HepG2 (cell line): ENCODE measurements at regions of chr14 and their contacts with region 1.

Region 1: GRCh38 chr14:49852301-49853157 is at the start of gene NEMF:
- DNase-seq: peak; percentile 87
- ATAC-seq: peak; percentile 87
- H3K4me3 ChIP-seq: peak within 1 kb of the TSS; percentile 95 to 97 (median 96)
- H3K27ac ChIP-seq: peak within 1 kb of the TSS; percentile 89
- H3K4me1 ChIP-seq: peaks cover 19% of the 10 kb centered on the region
- H3K27me3 ChIP-seq: no peaks in the 10 kb centered on the region; a peak in 1 of 5 replicates
- CTCF ChIP-seq: peak; percentile 83
- EP300 ChIP-seq: no peak
- POLR2A ChIP-seq: peak; percentile 90 to 93
- RAD21 ChIP-seq: no peak; the same call in 1 of the 2 replicates
- total RNA-seq, gene NEMF: 57.9 and 62.5 TPM in 2 replicates

Region 2: DNA sequence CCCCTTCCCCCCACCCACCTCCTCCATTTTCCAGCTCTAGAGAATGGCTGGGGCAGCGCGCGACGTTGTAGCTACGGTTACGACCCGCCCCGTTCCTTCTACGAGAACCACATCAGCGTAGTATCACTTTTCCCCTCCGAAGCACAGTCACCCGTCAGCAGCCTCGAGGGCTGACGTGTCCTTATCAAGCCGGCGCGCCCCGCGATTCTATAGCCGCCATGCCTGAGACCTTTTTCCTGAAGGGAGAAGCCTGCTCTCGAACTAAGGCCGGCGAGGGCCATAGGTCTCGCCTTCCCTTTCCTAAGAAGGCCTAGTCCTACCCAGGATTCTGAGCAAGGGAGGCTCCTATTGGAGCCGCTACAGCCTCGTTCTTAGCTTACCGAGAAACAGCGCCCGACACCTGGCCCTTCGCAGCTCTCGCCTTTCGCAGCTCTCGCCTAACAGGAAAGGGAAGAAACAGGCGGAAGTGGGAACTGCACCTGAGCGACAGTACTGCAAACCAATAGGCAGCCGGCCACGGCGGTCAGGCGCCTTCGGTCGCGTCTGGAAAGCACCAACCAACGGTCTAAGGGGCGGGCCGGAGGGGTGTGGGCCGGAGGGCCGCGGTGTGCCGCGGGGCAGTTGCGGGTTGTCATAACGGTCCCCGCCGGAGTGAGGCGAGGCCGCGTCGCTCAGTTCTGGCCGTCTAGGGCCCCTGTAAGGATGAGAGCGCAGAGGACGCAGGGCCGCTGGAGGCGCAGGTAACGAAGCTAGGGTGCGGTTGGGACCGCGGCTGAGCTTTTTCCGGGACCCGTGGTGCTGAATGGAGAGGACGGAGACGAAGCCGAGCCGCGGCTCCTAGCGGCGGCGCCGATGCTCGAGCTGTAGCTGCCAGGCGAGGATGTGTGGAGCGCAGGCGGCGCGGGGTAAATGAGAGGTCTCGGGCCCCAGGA is 232.1 kb before region 1 on chr14 and contains the starts of genes MGAT2 and RPL36AL:
- CTCF ChIA-PET with region 1: no interaction called
- POLR2A ChIA-PET with region 1: interaction called, 10 read pairs
- in situ Hi-C with region 1: no loop called
- intact Hi-C with region 1: no loop called
- DNase-seq: peak; percentile 95
- ATAC-seq: peak; percentile 97
- H3K4me3 ChIP-seq: peak within 1 kb of the TSS; percentile 81 to 92 (median 92)
- H3K27ac ChIP-seq: peak within 1 kb of the TSS; percentile 94
- H3K4me1 ChIP-seq: peaks cover 62% of the 10 kb centered on the region
- H3K27me3 ChIP-seq: no peaks in the 10 kb centered on the region; a peak in 1 of 5 replicates
- CTCF ChIP-seq: peak; percentile 46
- EP300 ChIP-seq: peak in 1 of 2 experiments; percentile 57; a peak in 1 of 4 replicates
- POLR2A ChIP-seq: peak; percentile 97 to 98
- RAD21 ChIP-seq: peak; percentile 63
- total RNA-seq, gene MGAT2: 47.2 and 51.9 TPM in 2 replicates
- total RNA-seq, gene RPL36AL: 294 and 383 TPM in 2 replicates

Region 3: DNA sequence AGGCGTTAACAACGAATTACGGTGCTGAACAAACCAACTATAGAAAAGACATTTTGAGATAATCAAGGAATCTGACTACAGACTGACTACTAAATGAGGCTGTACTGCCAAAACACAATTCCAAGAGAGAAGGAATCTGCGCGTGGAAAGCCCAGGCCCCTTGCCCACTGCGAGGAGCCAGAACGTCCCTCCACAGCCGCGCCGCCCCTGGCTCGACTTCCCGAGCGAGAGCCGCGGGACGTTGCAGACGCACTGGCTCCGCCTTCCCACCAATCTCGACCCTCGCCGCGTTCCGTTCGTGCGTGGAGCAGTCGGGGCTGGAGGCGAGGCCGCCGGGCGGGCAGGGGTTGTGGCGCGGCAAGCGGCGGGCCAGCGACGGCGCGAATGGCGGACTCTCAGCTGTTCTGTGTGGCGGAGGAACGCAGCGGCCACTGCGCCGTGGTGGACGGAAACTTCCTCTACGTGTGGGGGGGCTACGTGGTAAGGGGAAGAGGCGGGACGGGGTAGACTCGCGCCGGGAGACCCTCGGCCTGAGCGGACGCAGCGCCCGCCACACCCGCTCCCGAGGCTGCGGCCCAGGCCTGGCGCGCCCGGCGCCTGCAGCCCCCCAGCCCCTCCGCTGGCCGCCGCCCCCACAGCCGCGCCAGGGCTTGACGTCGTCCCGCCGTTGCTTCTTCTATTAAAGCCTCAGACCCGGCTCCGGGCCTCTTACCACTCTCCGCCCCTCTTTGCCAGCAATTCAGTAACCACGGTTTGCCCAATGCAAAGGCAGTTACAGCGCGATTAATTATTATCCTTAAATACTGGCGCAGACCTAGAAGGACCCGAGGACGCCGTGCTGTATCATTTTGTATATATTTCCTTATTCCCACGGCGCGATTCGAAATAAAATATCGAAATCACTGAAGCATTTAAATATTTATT is 159.5 kb before region 1 on chr14 and contains the start of gene KLHDC1:
- CTCF ChIA-PET with region 1: no interaction called
- POLR2A ChIA-PET with region 1: interaction called, 3 read pairs
- in situ Hi-C with region 1: no loop called
- intact Hi-C with region 1: loop called (anchors 5 kb)
- DNase-seq: peak; percentile 66
- ATAC-seq: peak; percentile 83
- H3K4me3 ChIP-seq: peak within 1 kb of the TSS; percentile 67 to 88 (median 75)
- H3K27ac ChIP-seq: peak within 1 kb of the TSS; percentile 77
- H3K4me1 ChIP-seq: peaks cover 39% of the 10 kb centered on the region
- H3K27me3 ChIP-seq: no peaks in the 10 kb centered on the region; a peak in 1 of 5 replicates
- CTCF ChIP-seq: peak; percentile 35; the same call in 1 of the 2 replicates
- EP300 ChIP-seq: no peak
- POLR2A ChIP-seq: peak; percentile 50 to 70; a peak in 3 of 4 replicates
- RAD21 ChIP-seq: 0 out of 2 replicates have a peak, but pooled peaks have one; percentile 31
- total RNA-seq, gene KLHDC1: 0.11 TPM in 1 of 2 replicates, not detected in the other

Region 4: GRCh38 chr14:49880267-49881064 is 27.9 kb after region 1 on chr14:
- CTCF ChIA-PET with region 1: no interaction called
- POLR2A ChIA-PET with region 1: no interaction called
- in situ Hi-C with region 1: no loop called
- intact Hi-C with region 1: no loop called
- DNase-seq: no peak
- ATAC-seq: peak; percentile 72
- H3K4me3 ChIP-seq: peak overlapping the region in 1 of 3 experiments; percentile 44; a peak in 2 of 6 replicates
- H3K27ac ChIP-seq: no peak overlapping the region
- H3K4me1 ChIP-seq: peaks cover 32% of the 10 kb centered on the region
- H3K27me3 ChIP-seq: no peaks in the 10 kb centered on the region
- CTCF ChIP-seq: no peak
- EP300 ChIP-seq: no peak
- POLR2A ChIP-seq: no peak
- RAD21 ChIP-seq: no peak

Region 5: DNA sequence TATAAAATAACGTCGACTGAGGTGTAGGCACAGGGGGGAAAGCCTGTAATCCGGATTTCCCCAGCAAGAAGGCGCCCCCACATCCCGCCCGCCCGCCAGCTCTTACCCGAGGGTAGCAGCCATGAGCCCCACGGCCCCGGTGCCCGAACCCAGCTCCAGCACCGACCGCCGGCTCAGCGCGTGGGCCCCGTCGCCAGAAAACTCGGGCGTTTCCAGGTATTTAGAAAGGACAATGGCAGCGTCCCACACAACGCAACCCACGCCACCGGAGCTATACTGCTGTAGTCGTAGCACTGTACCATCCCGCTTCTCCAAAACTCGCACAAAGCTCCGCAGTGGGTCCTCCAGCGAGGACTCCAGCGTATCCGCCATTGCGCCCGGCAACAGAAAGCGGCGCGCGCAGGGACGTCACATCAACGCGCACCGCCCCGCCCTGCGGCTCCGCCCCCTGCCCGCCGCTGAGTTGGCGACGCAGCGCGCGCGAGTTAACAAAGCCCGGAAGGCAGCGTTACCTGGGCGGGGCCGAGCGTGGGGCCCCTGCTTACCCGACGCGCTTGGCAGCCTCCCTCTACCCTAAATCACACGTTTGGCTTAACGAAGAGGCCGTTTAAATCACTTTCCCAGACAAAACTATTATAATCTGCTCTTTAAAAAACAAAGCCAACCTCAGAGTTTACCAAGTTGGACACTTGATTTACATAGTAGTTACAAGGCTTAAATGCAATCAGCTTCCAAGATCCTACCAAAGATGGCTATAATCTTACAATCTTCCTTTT is 263.8 kb after region 1 on chr14 and contains the start of gene VCPKMT:
- CTCF ChIA-PET with region 1: no interaction called
- POLR2A ChIA-PET with region 1: interaction called, 17 read pairs
- in situ Hi-C with region 1: no loop called
- intact Hi-C with region 1: no loop called
- DNase-seq: peak; percentile 80
- ATAC-seq: peak; percentile 99
- H3K4me3 ChIP-seq: peak within 1 kb of the TSS; percentile 78 to 87 (median 82)
- H3K27ac ChIP-seq: peak within 1 kb of the TSS; percentile 67
- H3K4me1 ChIP-seq: peaks cover 20% of the 10 kb centered on the region
- H3K27me3 ChIP-seq: no peaks in the 10 kb centered on the region
- CTCF ChIP-seq: 0 out of 2 replicates have a peak, but pooled peaks have one; percentile 15
- EP300 ChIP-seq: peak in 1 of 2 experiments; percentile 45; a peak in 1 of 4 replicates
- POLR2A ChIP-seq: peak; percentile 88 to 96
- RAD21 ChIP-seq: peak; percentile 44; the same call in 1 of the 2 replicates
- total RNA-seq, gene VCPKMT: 5.4 and 5.5 TPM in 2 replicates

Region 6: DNA sequence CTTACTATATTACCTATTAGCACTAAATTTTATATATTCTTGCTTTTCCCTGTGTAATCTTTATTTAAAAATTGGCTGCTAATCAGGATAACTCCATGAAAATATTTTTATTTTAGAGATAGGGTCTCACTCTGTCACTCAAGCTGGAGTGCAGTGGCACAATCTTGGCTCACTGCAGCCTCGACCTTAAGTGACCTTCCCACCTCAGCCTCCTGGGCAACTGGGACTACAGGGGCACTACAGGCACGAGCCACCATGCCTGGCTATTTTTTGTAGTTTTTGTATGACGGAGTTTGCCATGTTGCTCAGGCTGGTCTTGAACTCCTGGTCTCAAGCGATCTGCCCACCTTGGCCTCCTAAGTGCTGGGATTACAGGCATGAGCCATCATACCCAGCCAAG is 296.3 kb after region 1 on chr14:
- CTCF ChIA-PET with region 1: no interaction called
- POLR2A ChIA-PET with region 1: no interaction called
- in situ Hi-C with region 1: no loop called
- intact Hi-C with region 1: no loop called
- DNase-seq: no peak
- ATAC-seq: no peak
- H3K4me3 ChIP-seq: no peak overlapping the region
- H3K27ac ChIP-seq: no peak overlapping the region
- H3K4me1 ChIP-seq: no peaks in the 10 kb centered on the region
- H3K27me3 ChIP-seq: no peaks in the 10 kb centered on the region
- CTCF ChIP-seq: no peak
- EP300 ChIP-seq: no peak
- POLR2A ChIP-seq: no peak
- RAD21 ChIP-seq: no peak

Region 7: DNA sequence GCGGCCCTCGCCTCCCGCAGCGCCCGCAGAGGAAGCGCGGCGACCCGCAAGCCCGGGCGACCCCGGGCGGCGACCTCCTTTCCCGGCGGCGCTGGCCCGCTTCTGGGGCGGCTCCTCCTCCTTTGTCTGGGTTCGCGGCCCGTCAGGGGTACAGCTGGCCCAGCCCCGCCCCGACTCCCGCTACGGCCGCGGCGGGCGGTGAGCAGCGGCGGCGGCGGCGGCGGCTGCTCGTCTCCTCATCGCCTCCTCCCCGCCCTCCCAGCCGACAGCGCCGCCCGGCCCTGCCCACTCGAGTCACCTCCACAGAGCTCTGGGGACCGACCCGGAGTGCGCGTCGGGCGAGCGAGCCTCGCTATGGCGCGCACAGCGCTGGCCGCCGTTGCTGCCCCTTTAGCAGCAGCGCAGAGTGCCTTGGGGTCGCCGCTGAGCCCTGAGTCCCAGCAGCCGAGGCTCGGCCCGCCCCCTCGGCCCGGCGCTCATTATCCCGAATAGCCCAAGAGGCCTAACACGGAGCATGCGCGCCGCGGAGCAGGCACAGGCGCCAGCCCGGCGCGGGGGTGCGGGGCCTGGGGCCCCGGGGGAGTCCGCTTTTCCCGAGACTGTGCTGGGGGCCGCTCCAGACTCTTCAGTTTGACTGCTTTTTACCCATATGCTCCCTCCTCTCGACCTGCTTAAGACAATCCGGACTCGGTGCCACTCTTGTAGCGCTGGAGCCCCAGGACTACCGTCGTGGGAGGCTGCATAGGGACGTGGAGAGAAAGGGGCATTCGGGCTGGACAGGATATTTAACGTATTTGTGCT is 379.1 kb after region 1 on chr14 and contains the start of gene SOS2:
- CTCF ChIA-PET with region 1: no interaction called
- POLR2A ChIA-PET with region 1: no interaction called
- in situ Hi-C with region 1: loop called (anchors 25 kb)
- intact Hi-C with region 1: no loop called
- DNase-seq: peak; percentile 78
- ATAC-seq: peak; percentile 95
- H3K4me3 ChIP-seq: peak within 1 kb of the TSS; percentile 77 to 90 (median 87)
- H3K27ac ChIP-seq: peak within 1 kb of the TSS; percentile 97
- H3K4me1 ChIP-seq: peaks cover 37% of the 10 kb centered on the region
- H3K27me3 ChIP-seq: no peaks in the 10 kb centered on the region
- CTCF ChIP-seq: peak; percentile 51
- EP300 ChIP-seq: no peak
- POLR2A ChIP-seq: peak; percentile 73 to 97
- RAD21 ChIP-seq: 0 out of 2 replicates have a peak, but pooled peaks have one; percentile 3
- total RNA-seq, gene SOS2: 12.1 and 14.9 TPM in 2 replicates